OCI-LY7 (cell line): ENCODE measurements at regions of chr19 and their contacts with region 1.

Region 1: GRCh38 chr19:1113033-1113985 is 9.5 kb downstream of the GPX4 start:
- DNase-seq: peak; percentile 86
- H3K4me3 ChIP-seq: no peak overlapping the region
- H3K27ac ChIP-seq: no peak overlapping the region
- H3K4me1 ChIP-seq: peaks cover 4% of the 10 kb centered on the region
- CTCF ChIP-seq: peak; percentile 80

Region 2: DNA sequence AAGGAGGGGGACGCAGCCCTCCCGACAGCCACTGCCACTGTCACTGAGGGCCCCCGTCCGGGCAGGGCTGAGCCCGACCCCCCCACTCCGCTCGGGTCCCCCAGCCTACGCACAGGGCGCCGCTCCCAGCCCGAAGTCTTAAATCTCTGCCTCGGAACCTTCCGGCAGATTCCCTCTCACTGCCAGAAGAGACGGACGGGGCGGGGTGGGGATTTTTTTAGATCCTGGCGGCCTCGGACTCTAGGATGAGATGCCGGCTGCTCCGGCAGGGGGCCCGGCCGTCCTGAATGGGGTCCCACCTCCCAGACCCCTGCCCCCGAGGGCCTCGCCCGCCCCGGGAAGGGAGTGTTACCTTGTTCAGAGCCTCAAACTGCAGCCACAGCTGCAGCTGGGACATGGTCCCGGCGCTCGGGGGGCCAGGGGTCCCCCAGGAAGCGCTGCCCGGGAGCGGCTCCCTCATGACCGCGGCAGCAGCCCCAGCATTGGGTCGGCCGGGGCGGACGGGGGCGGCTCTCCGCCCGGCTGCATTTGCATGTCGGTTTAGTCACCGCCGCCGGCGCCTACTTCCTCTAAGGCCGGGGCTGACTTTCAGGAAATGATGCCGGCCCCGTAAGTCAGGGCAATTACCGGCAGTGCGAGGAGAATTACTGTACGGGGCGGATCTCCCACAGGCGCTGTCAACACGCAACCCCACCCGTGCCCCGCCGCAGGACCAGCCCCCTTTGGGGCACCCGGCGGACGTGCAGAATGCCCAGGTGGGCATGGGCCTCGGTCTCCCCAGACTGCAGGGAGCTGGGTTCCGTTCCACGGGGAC is 18.6 kb after region 1 on chr19:
- CTCF ChIA-PET with region 1: interaction called, 12 read pairs
- POLR2A ChIA-PET with region 1: no interaction called
- intact Hi-C with region 1: no loop called
- DNase-seq: peak; percentile 89
- H3K4me3 ChIP-seq: peak overlapping the region; percentile 71
- H3K27ac ChIP-seq: peak overlapping the region; percentile 85
- H3K4me1 ChIP-seq: peaks cover 34% of the 10 kb centered on the region
- CTCF ChIP-seq: no peak

Region 3: GRCh38 chr19:1182727-1183126 is 69.4 kb after region 1 on chr19:
- CTCF ChIA-PET with region 1: interaction called, 11 read pairs
- POLR2A ChIA-PET with region 1: no interaction called
- intact Hi-C with region 1: no loop called
- DNase-seq: no peak
- H3K4me3 ChIP-seq: no peak overlapping the region
- H3K27ac ChIP-seq: no peak overlapping the region
- H3K4me1 ChIP-seq: peaks cover 7% of the 10 kb centered on the region
- CTCF ChIP-seq: no peak

Region 4: DNA sequence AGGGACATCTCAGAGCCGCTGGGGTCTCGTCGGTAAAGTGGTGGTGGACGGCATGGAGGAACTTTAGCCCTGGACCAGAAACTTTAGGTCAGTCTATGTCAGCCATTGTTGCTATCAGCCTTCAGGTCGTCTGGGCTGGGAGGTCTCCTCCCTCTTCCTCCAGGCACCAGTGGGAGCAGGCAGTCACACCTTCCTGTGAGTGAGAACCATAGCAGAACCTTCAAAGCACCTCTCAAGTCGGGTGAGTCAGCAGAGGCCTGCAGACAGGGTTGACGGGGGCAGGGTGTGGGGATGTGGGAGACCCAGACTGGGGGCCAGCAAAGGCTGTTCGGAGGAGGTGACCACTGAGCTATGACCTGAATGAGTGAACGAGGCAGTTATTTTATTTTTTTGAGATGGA is 76.1 kb after region 1 on chr19:
- CTCF ChIA-PET with region 1: interaction called, 9 read pairs
- POLR2A ChIA-PET with region 1: interaction called, 4 read pairs
- intact Hi-C with region 1: loop called (anchors 5 kb)
- DNase-seq: no peak
- H3K4me3 ChIP-seq: no peak overlapping the region
- H3K27ac ChIP-seq: no peak overlapping the region
- H3K4me1 ChIP-seq: peaks cover 5% of the 10 kb centered on the region
- CTCF ChIP-seq: no peak